AG04449 (cell line): ENCODE measurements at regions of chr11 and their contacts with region 1.

Region 1: DNA sequence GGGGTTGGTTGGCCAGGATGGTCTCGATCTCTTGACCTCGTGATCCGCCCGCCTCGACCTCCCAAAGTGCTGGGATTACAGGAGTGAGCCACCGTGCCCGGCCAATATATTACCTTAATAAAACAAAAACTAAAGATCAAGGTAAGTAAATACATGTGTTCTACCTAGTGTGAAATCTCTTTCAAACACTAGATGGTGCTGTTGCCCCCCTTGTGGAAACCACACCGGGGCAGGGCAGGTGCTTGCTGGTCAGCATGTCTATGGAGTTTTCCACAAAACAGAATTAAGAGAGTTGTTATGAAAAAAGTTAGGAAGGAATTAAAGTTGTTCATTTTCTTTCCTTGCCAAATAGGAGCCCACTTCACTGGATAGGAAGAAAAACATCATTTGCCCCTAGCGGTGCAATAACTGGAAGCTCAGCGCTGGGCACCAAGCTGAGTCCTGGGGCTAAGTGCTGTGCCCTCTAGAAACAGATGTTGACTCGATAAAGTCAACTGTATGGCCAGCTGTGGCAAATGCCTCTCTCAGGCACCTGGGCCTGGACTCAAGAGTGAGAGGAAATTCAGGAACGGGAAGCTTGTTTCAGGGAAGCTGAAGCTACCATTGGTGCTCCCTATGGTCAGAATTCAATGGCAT is 6.3 kb upstream of the KCNJ5 start:
- DNase-seq: no peak
- H3K4me3 ChIP-seq: no peak overlapping the region
- CTCF ChIP-seq: peak; percentile 59

Region 2: DNA sequence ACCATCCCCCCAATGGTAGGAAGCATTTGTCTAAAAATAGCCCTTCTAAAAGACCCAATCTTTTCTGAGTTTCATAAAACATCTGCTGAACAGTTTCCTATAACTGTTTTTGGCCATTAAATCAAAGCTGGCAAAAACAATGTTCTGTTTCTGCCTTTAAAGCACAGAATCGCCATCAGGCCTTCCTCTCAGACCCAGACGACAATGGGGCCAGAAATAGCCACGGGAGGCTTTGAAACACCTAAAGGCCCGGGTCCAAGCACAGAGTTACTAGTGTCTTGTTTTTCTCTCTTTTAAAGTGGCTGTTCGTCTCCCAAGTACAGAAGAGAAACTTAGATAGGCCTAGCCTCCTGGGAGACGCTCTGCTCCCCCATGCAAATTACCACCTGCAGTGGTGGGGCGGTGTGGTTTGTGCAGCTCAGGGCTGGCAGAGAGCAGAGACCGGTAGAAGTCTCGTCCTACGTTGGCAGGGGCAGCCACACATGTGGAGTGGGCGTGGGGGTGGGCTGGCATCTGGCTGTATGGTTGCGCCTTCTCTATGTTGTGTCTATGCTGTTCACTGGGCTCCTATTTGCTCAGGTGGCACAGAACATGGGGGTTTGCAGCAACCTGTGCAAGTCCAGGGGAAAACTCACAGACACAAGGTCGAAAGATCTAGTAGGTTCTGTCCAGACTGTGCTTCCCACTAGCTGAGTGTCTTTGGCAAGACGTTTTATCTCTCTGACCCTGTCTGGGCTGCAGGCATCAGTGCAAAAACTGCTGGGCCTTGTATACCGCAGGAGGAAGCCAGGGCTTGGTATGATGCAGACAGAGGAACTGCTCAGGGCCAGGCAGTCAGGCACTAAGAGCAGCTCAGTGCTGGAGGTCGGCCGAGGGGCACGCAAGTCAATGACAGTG is 273.9 kb before region 1 on chr11:
- CTCF ChIA-PET with region 1: no interaction called
- POLR2A ChIA-PET with region 1: no interaction called
- DNase-seq: no peak
- H3K4me3 ChIP-seq: no peak overlapping the region
- CTCF ChIP-seq: no peak

Region 3: GRCh38 chr11:128874427-128874826 is 10.4 kb before region 1 on chr11:
- CTCF ChIA-PET with region 1: interaction called, 51 read pairs
- POLR2A ChIA-PET with region 1: no interaction called
- DNase-seq: no peak
- H3K4me3 ChIP-seq: no peak overlapping the region
- CTCF ChIP-seq: no peak

Region 4: DNA sequence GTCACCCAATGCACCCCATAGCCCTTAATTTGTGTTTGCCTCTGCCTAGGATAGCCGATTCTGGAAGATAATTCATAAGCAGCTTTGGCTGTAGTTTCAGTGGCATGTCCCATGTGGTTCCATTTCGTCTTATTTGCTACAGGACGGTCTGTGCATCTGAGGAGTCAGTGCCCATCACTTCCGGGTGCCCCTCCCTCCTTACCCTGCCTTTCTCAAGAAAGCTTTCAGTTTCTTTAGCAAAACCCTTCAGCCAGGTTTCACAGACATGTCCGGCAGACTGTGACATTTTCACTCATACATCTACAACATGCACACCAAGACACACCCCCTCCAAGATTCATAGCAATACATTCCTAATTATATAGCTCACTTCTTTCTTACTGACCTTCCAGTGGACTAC is 43.6 kb after region 1 on chr11:
- CTCF ChIA-PET with region 1: interaction called, 14 read pairs
- POLR2A ChIA-PET with region 1: no interaction called
- DNase-seq: no peak
- H3K4me3 ChIP-seq: no peak overlapping the region
- CTCF ChIP-seq: no peak

Region 5: GRCh38 chr11:128942817-128943427 is 58.1 kb after region 1 on chr11 and contains the start of gene TP53AIP1:
- CTCF ChIA-PET with region 1: interaction called, 102 read pairs
- POLR2A ChIA-PET with region 1: no interaction called
- DNase-seq: no peak
- H3K4me3 ChIP-seq: no peak within 1 kb of the TSS
- CTCF ChIP-seq: no peak

Region 6: GRCh38 chr11:128956401-128957201 is 71.8 kb after region 1 on chr11:
- CTCF ChIA-PET with region 1: interaction called, 488 read pairs
- POLR2A ChIA-PET with region 1: no interaction called
- DNase-seq: peak; percentile 26
- H3K4me3 ChIP-seq: no peak overlapping the region
- CTCF ChIP-seq: peak; percentile 57

Region 7: DNA sequence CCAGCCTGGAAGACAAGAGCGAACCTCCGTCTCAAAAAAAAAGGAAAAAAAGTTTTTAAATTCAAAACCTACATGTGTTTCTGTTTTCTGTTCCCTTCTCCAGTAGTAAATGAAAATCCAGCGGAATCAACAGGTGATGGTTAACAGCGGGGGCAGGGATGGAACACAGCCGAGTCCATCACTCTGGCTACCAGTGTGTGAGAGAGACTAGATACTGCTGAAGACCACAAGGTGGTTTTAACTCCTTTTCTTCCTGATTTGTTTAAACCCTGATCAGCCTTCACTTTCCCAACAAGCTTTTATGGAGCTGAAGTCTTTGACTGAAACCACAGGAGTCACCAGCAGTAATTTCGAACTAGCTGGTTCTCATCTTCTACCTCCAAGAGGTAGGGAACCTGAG is 310.9 kb after region 1 on chr11:
- CTCF ChIA-PET with region 1: no interaction called
- POLR2A ChIA-PET with region 1: no interaction called
- DNase-seq: no peak
- H3K4me3 ChIP-seq: no peak overlapping the region
- CTCF ChIP-seq: no peak